ENCODE measurements at regions of chr2 and their contacts with region 1.

Region 1: DNA sequence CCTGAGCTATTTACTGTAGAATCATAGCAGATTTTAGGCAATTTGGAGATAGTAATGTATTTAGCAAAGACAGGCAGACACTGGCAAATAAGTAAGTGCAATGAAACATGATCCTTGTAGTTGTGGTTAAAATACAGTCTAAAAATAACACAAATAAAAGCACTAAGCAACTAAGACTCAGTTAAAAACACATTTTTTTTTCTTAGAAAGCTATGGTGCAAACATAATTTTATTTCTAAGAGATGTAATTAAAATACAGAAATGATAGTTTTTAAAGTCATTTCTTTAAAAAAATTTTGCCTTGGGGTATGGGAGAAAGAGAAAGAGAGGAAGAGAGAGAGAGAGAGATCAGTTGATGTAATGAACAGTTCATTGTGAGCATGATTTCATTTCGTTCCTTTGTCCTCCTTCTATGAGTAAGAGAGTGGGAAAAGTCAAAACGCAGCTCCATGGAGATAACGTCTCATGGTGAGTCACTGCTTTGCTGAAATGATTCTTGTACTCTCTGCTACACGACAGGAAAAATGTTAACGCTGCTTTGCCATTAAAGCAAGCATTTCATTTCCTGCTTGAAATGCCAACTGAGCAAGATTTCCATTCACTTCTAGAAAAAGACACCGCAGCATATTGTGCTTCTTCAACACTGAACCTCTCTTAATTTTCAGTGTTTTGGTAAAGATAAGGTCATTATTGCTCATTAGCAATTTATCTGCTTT is 61.3 kb upstream of the PGAP1 start:
- DNase-seq: peak; percentile 76
- H3K4me3 Mint-ChIP-seq: peak overlapping the region; percentile 17
- H3K27ac Mint-ChIP-seq: peak overlapping the region; percentile 98
- H3K4me1 Mint-ChIP-seq: peaks cover 78% of the 10 kb centered on the region
- H3K27me3 Mint-ChIP-seq: no peaks in the 10 kb centered on the region

Region 2: DNA sequence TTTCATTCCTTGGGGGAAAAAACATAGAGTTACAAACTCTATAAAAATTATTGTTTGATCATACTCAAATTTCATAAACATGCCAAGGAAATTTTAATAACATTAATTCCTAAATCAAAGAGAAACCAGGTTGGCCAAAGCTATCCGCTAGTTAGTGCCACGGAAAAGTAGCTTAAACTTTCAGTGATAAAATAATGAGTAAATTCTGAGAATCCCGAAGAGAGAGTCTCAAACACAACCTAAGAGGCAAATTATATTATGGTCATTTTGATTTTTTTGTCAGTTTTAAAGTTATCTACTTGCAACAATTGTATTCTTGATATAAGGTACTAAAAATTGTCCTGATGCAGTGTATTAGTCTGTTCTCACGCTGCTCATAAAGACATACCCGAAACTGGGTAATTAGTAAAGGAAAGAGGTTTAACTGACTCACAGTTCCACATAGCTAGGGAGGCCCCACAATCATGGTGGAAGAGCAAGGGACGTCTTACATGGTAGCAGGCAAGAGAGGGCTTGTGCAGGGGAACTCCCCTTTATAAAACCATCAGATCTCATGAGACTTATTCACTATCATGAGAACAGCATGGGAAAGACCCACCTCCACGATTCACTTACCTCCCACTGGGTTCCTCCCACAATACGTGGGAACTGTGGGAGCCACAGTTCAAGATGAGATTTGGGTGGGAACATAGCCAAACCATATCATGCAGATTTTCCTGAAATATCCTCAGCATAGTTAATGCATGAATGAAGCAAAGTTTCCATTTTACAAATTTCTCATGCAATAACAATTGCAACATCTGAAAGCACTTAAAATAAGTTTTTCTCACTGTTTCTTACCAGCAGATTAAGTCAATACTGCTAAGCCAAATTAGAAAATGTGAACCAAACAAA is 610.6 kb before region 1 on chr2:
- CTCF ChIA-PET with region 1: no interaction called
- intact Hi-C with region 1: loop called (anchors 5 kb)
- DNase-seq: peak; percentile 62
- H3K4me3 Mint-ChIP-seq: no peak overlapping the region
- H3K27ac Mint-ChIP-seq: peak overlapping the region; percentile 50
- H3K4me1 Mint-ChIP-seq: peaks cover 12% of the 10 kb centered on the region
- H3K27me3 Mint-ChIP-seq: no peaks in the 10 kb centered on the region

Region 3: GRCh38 chr2:196617430-196617829 is 370.4 kb before region 1 on chr2:
- CTCF ChIA-PET with region 1: no interaction called
- intact Hi-C with region 1: no loop called
- DNase-seq: no peak
- H3K4me3 Mint-ChIP-seq: no peak overlapping the region
- H3K27ac Mint-ChIP-seq: no peak overlapping the region
- H3K4me1 Mint-ChIP-seq: no peaks in the 10 kb centered on the region
- H3K27me3 Mint-ChIP-seq: peaks cover 6% of the 10 kb centered on the region

Region 4: GRCh38 chr2:196670342-196670741 is 317.5 kb before region 1 on chr2:
- CTCF ChIA-PET with region 1: no interaction called
- intact Hi-C with region 1: no loop called
- DNase-seq: no peak
- H3K4me3 Mint-ChIP-seq: no peak overlapping the region
- H3K27ac Mint-ChIP-seq: no peak overlapping the region
- H3K4me1 Mint-ChIP-seq: peaks cover 2% of the 10 kb centered on the region
- H3K27me3 Mint-ChIP-seq: no peaks in the 10 kb centered on the region

Region 5: DNA sequence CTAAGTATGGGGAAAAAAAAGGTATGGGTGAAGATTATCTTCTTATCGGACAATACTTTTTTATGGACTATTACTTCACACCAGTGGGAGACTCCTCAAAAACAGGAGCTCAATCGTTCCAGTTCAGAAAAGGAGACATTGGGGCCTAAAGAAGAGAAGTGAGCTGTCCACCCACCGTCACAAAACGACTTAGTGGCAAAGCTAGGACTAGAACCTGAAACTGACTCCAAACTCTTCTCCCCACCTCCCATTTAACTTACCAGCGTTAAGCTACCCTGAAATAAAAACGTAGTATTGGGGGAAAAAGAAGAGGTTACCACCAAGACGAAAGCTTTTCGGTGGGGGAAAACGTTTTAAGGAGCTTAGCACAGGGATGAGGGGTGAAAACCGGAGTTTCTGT is 188.8 kb before region 1 on chr2:
- CTCF ChIA-PET with region 1: no interaction called
- intact Hi-C with region 1: loop called (anchors 1 kb)
- DNase-seq: no peak
- H3K4me3 Mint-ChIP-seq: peak overlapping the region; percentile 91
- H3K27ac Mint-ChIP-seq: peak overlapping the region; percentile 90
- H3K4me1 Mint-ChIP-seq: peaks cover 44% of the 10 kb centered on the region
- H3K27me3 Mint-ChIP-seq: peaks cover 3% of the 10 kb centered on the region

Region 6: GRCh38 chr2:196961889-196962288 is 25.9 kb before region 1 on chr2:
- CTCF ChIA-PET with region 1: interaction called, 3 read pairs
- intact Hi-C with region 1: loop called (anchors 1 kb)
- DNase-seq: peak; percentile 38
- H3K4me3 Mint-ChIP-seq: no peak overlapping the region
- H3K27ac Mint-ChIP-seq: peak overlapping the region; percentile 32
- H3K4me1 Mint-ChIP-seq: peaks cover 27% of the 10 kb centered on the region
- H3K27me3 Mint-ChIP-seq: no peaks in the 10 kb centered on the region

Region 7: DNA sequence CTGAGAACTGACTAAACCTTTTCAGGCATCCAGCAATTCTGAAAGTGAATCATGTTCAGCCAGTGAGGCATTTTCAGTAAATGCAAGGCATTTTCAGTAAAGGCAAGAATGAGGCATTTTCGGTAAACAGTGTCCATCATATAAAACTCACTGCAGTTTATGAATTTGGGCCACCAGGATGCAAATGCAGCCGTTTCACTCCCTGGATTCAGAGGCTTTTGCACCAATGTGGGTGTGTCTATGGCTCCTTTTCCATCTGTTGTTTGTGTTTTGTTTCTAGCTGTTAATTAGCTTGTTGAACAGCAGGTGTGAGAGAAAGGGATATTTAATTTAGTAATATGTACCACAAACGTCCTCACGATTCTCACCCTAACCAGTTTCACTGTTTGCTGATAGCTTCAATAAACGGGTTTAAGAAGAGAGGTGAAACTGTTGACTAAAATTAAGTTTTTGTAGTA is 55.0 kb after region 1 on chr2:
- CTCF ChIA-PET with region 1: no interaction called
- intact Hi-C with region 1: loop called (anchors 1 kb)
- DNase-seq: peak; percentile 45
- H3K4me3 Mint-ChIP-seq: no peak overlapping the region
- H3K27ac Mint-ChIP-seq: peak overlapping the region; percentile 85
- H3K4me1 Mint-ChIP-seq: peaks cover 35% of the 10 kb centered on the region
- H3K27me3 Mint-ChIP-seq: no peaks in the 10 kb centered on the region

Region 8: GRCh38 chr2:197322724-197323720 is 335.2 kb after region 1 on chr2:
- CTCF ChIA-PET with region 1: no interaction called
- intact Hi-C with region 1: loop called (anchors 2 kb)
- DNase-seq: peak; percentile 41
- H3K4me3 Mint-ChIP-seq: peak overlapping the region; percentile 62
- H3K27ac Mint-ChIP-seq: peak overlapping the region; percentile 88
- H3K4me1 Mint-ChIP-seq: peaks cover 73% of the 10 kb centered on the region
- H3K27me3 Mint-ChIP-seq: no peaks in the 10 kb centered on the region

Region 9: GRCh38 chr2:197453161-197453914 is 465.5 kb after region 1 on chr2 and contains the start of gene COQ10B:
- CTCF ChIA-PET with region 1: no interaction called
- intact Hi-C with region 1: loop called (anchors 1 kb)
- DNase-seq: peak; percentile 99
- H3K4me3 Mint-ChIP-seq: peak within 1 kb of the TSS; percentile 100
- H3K27ac Mint-ChIP-seq: peak within 1 kb of the TSS; percentile 100
- H3K4me1 Mint-ChIP-seq: peaks cover 45% of the 10 kb centered on the region
- H3K27me3 Mint-ChIP-seq: no peaks in the 10 kb centered on the region
- total RNA-seq, gene COQ10B: 17.5 to 17.8 TPM